ENCODE measurements at regions of chr14 and their contacts with region 1.

Region 1: GRCh38 chr14:21428930-21429329 is 27.0 kb downstream of the CHD8 start:
- DNase-seq: peak; percentile 64
- ATAC-seq: peak; percentile 76

Region 2: DNA sequence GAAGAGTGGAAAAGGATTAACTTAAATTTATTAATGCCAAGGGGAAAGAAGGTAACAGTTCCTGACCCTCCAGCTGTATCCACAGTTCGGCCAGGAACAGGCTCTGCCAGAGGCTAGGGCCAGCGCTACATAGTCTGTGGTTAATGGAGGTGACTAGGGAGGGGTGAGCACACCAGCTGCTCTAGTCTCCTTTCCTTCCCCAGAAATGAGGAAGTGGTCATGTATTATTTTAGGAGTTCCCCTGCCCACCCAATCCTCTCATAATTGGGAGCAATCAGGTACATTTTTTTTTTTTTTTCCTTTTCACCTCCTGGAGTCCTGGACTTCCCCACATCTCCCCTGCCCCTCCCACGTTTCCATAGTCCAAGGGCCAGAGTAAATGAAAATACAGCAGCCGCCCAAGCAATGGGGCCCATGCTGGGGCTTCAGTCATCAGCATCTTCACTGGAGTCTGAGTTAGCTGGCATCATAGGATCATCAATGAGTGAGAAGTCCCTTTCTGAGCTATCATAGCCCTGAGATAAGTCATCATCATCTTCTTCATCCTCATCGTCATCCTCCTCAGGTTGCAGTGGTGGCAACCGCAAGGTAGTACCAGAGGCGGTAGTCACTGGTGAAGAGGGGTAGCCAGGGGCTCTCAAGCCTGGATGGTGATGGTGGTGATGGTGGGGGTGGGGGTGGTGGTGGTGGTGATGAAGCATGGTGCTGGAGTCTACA is 43.6 kb before region 1 on chr14:
- intact Hi-C with region 1: loop called (anchors 5 kb)
- DNase-seq: no peak
- ATAC-seq: no peak

Region 3: GRCh38 chr14:21553266-21553665 is 124.3 kb after region 1 on chr14:
- intact Hi-C with region 1: no loop called
- DNase-seq: no peak
- ATAC-seq: no peak

Region 4: GRCh38 chr14:21780429-21781084 is 351.6 kb after region 1 on chr14:
- intact Hi-C with region 1: no loop called
- DNase-seq: no peak
- ATAC-seq: no peak